ENCODE measurements at regions of chr16 and their contacts with region 1.

Region 1: GRCh38 chr16:30650369-30651123 is at the start of gene PRR14:
- DNase-seq: peak; percentile 96 to 99 (median 98)
- ATAC-seq: peak; percentile 89
- H3K4me3 ChIP-seq: peak within 1 kb of the TSS; percentile 86
- H3K4me3 Mint-ChIP-seq: peak within 1 kb of the TSS; percentile 99
- H3K27ac ChIP-seq: peak within 1 kb of the TSS; percentile 84 to 96
- H3K27ac Mint-ChIP-seq: peak within 1 kb of the TSS; percentile 95
- H3K4me1 ChIP-seq: peaks cover 30% of the 10 kb centered on the region
- H3K4me1 Mint-ChIP-seq: peaks cover 22% of the 10 kb centered on the region
- H3K27me3 ChIP-seq: no peaks in the 10 kb centered on the region
- H3K27me3 Mint-ChIP-seq: no peaks in the 10 kb centered on the region
- CTCF ChIP-seq: no peak
- total RNA-seq, gene PRR14: 50.2 to 51.7 TPM

Region 2: DNA sequence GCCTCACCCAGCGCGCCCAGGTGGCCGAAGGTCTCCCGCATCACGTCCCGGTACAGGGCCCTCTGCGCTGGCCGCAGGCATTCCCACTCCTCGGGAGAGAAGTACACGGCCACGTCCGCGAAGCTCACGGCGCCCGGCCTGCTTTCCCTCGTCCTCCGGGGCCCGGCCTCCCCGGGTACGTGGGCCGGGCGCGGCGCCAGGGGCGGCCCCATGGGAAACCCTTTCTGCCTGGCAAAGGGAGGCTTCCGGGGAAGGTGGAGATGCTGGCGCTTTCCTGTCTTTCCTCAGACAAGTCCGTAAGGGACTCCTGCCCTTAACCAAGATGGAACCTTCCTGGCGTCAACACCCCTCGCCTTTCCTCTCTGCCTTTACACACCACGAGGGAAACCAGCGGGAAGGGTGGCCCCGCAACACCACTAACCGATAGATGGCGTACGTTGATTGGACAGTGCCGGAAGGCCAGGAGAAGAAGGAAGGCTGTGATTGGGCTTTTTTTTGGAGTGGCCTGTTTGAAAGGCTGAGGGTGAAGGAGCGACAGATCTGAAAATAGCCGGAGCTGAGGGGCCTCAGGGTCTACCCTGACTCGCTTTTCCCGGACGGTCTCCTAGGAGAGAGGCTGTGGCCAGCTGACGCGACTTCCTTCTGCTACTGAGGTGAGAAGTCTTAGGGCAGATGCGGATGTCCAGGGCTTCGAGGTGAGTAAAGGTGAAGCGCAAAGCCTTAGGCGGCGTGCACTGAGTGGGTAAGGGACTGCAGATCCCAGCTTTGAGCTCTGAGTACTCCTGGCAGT is 65.0 kb before region 1 on chr16 and contains the start of gene ZNF785:
- CTCF ChIA-PET with region 1: no interaction called
- POLR2A ChIA-PET with region 1: interaction called, 8 read pairs
- intact Hi-C with region 1: loop called in 1 of 2 experiments (anchors 2 kb)
- DNase-seq: peak; percentile 81 to 97 (median 87)
- ATAC-seq: peak; percentile 99
- H3K4me3 ChIP-seq: peak within 1 kb of the TSS; percentile 64
- H3K4me3 Mint-ChIP-seq: peak within 1 kb of the TSS; percentile 92
- H3K27ac ChIP-seq: peak within 1 kb of the TSS; percentile 53 to 57
- H3K27ac Mint-ChIP-seq: peak within 1 kb of the TSS; percentile 93
- H3K4me1 ChIP-seq: peaks cover 26% of the 10 kb centered on the region
- H3K4me1 Mint-ChIP-seq: peaks cover 18% of the 10 kb centered on the region
- H3K27me3 ChIP-seq: no peaks in the 10 kb centered on the region
- H3K27me3 Mint-ChIP-seq: no peaks in the 10 kb centered on the region
- CTCF ChIP-seq: no peak
- total RNA-seq, gene ZNF785: 6.6 to 7.7 TPM

Region 3: GRCh38 chr16:30615358-30616091 is 35.0 kb before region 1 on chr16:
- CTCF ChIA-PET with region 1: interaction called, 10 read pairs
- POLR2A ChIA-PET with region 1: interaction called, 18 read pairs
- intact Hi-C with region 1: loop called (anchors 1 kb)
- DNase-seq: peak; percentile 41 to 82 (median 60)
- ATAC-seq: peak; percentile 84
- H3K4me3 ChIP-seq: no peak overlapping the region
- H3K4me3 Mint-ChIP-seq: no peak overlapping the region
- H3K27ac ChIP-seq: no peak overlapping the region
- H3K27ac Mint-ChIP-seq: no peak overlapping the region
- H3K4me1 ChIP-seq: peaks cover 7% of the 10 kb centered on the region
- H3K4me1 Mint-ChIP-seq: peaks cover 2% of the 10 kb centered on the region
- H3K27me3 ChIP-seq: no peaks in the 10 kb centered on the region
- H3K27me3 Mint-ChIP-seq: no peaks in the 10 kb centered on the region
- CTCF ChIP-seq: peak; percentile 36

Region 4: GRCh38 chr16:30637942-30638341 is 12.6 kb before region 1 on chr16:
- CTCF ChIA-PET with region 1: interaction called, 6 read pairs
- POLR2A ChIA-PET with region 1: interaction called, 19 read pairs
- intact Hi-C with region 1: loop called (anchors 1 kb)
- DNase-seq: peak in 4 of 14 experiments; percentile 19 to 75 (median 63)
- ATAC-seq: peak; percentile 17
- H3K4me3 ChIP-seq: no peak overlapping the region
- H3K4me3 Mint-ChIP-seq: peak overlapping the region; percentile 48
- H3K27ac ChIP-seq: no peak overlapping the region
- H3K27ac Mint-ChIP-seq: no peak overlapping the region
- H3K4me1 ChIP-seq: peaks cover 19% of the 10 kb centered on the region
- H3K4me1 Mint-ChIP-seq: peaks cover 17% of the 10 kb centered on the region
- H3K27me3 ChIP-seq: no peaks in the 10 kb centered on the region
- H3K27me3 Mint-ChIP-seq: no peaks in the 10 kb centered on the region
- CTCF ChIP-seq: peak; percentile 24

Region 5: DNA sequence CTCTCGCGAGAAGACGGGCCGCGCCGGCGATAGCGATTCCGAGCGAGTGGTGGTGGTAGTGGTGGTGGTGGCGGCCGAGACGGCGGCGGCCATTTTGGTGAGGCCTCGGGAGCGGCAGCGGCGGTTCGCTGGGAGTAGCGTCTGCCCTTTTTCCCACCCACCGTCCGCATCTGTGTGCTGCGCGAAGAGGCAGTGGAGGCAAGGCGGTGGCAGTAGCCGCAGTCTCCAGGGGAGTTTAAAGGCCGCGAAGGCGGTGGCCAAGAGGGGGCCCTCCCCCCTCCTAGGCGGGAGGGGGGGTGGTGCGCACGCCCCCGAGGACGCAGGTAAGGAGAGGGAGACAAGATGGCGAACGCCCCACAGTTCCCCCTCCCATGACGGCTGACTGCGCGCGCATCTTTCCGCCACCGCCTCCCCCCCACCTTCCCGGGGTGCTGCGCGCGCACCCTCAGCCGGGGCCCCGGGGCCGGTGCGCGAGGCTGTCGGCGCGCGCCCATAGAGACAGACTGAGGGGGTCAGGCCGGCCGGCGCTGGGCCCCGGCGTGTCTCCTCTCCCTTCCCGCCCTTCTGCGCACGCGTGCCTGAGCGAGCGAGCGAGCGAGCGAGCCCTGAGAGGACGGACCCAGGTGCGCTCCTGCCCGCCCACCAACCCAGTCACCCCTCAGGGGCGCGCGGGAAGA is 47.7 kb after region 1 on chr16:
- CTCF ChIA-PET with region 1: interaction called, 28 read pairs
- POLR2A ChIA-PET with region 1: interaction called, 20 read pairs
- intact Hi-C with region 1: loop called (anchors 1 kb)
- DNase-seq: peak; percentile 97 to 100 (median 99)
- ATAC-seq: peak; percentile 75
- H3K4me3 ChIP-seq: peak overlapping the region; percentile 97
- H3K4me3 Mint-ChIP-seq: peak overlapping the region; percentile 98
- H3K27ac ChIP-seq: peak overlapping the region; percentile 100
- H3K27ac Mint-ChIP-seq: peak overlapping the region; percentile 100
- H3K4me1 ChIP-seq: peaks cover 38% of the 10 kb centered on the region
- H3K4me1 Mint-ChIP-seq: peaks cover 37% of the 10 kb centered on the region
- H3K27me3 ChIP-seq: no peaks in the 10 kb centered on the region
- H3K27me3 Mint-ChIP-seq: no peaks in the 10 kb centered on the region
- CTCF ChIP-seq: no peak